Breast epithelium (tissue), 4 donors: ENCODE measurements at regions of chr2 and their contacts with region 1.

Region 1: GRCh38 chr2:132400169-132400900 is 16.3 kb upstream of the GPR39 start:
- DNase-seq: no peak
- H3K4me3 ChIP-seq: no peak overlapping the region
- H3K27ac ChIP-seq: no peak overlapping the region
- H3K4me1 ChIP-seq: no peaks in the 10 kb centered on the region
- H3K27me3 ChIP-seq: no peaks in the 10 kb centered on the region
- CTCF ChIP-seq: no peak
- POLR2A ChIP-seq: no peak

Region 2: GRCh38 chr2:131402320-131403039 is 997.9 kb before region 1 on chr2:
- intact Hi-C with region 1: loop called (anchors 5 kb)
- DNase-seq: no peak
- H3K4me3 ChIP-seq: no peak overlapping the region
- H3K27ac ChIP-seq: no peak overlapping the region
- H3K4me1 ChIP-seq: no peaks in the 10 kb centered on the region
- H3K27me3 ChIP-seq: peaks cover 0 to 9% of the 10 kb centered on the region in 2 donors
- CTCF ChIP-seq: no peak
- POLR2A ChIP-seq: no peak

Region 3: GRCh38 chr2:132384491-132385151 is 15.7 kb before region 1 on chr2:
- intact Hi-C with region 1: loop called (anchors 1 kb)
- DNase-seq: no peak
- H3K4me3 ChIP-seq: no peak overlapping the region
- H3K27ac ChIP-seq: no peak overlapping the region
- H3K4me1 ChIP-seq: no peaks in the 10 kb centered on the region
- H3K27me3 ChIP-seq: no peaks in the 10 kb centered on the region
- CTCF ChIP-seq: no peak
- POLR2A ChIP-seq: no peak

Region 4: GRCh38 chr2:133293544-133294353 is 893.4 kb after region 1 on chr2:
- intact Hi-C with region 1: loop called (anchors 5 kb)
- DNase-seq: no peak
- H3K4me3 ChIP-seq: no peak overlapping the region
- H3K27ac ChIP-seq: no peak overlapping the region
- H3K4me1 ChIP-seq: no peaks in the 10 kb centered on the region
- H3K27me3 ChIP-seq: no peaks in the 10 kb centered on the region
- CTCF ChIP-seq: no peak
- POLR2A ChIP-seq: no peak

Region 5: DNA sequence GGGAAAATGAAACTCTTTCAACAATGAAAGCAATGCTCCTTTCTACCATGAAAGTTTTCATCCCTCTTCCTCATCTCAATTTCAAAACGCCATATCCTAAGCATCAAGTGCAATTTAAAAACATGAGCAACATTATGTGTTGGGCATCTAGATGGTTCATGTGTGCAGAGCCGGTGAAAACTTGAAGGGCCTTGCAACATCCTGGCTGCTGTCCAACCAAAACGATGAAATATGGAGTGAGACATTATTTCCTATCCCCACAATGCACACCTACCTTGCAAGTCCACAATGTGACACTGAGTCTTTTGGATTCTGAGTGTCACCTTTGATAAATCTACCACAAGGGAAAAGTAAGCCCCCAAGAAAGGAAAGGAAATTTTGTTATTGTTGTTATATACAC is 1057.9 kb after region 1 on chr2:
- intact Hi-C with region 1: no loop called
- DNase-seq: no peak
- H3K4me3 ChIP-seq: no peak overlapping the region
- H3K27ac ChIP-seq: no peak overlapping the region
- H3K4me1 ChIP-seq: no peaks in the 10 kb centered on the region
- H3K27me3 ChIP-seq: no peaks in the 10 kb centered on the region
- CTCF ChIP-seq: no peak
- POLR2A ChIP-seq: no peak